ENCODE measurements at regions of chr11 and their contacts with region 1.

Region 1: DNA sequence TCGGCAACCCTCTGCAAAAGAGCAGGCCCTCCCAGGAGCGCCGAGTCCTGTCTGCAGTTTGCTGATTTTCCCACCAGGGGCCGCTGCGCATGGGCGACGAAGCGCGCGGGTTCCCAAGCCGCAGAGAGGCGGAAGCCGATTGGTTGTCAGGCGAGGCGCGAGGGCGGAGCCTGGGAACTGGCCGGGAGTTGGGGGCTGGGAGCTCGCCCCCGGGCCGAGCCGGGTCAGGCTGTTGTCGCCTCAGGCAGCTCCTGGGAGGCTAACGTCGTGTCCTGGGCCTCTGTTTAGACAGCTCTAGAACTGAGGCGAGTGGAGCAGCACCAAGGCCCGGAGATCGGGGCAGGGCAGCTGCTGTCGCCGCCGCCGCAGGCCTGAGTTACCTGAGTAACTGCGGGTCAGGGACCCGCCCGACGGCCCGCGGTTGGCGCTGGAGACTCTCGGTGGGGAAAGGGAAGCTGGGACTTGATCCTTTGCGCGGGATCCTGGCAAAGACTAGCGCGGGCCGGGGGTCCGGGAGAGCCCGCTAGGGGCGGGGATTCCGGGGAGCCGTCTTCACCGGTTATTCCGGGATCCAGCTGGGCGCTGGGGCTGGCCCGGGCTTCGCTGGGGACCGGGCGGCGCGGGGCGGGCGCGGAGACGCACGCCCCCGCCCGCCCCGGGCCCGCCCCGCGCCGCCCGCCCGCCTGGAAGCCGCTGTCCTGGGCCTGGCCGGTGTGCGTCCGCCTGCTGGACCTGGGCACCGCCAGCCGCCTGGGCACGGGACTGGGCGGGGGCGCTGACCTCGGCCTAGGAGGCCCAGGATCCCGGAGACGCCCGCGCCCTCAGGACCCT is at the start of gene STIM1:
- DNase-seq: peak; percentile 96
- H3K4me3 ChIP-seq: peak within 1 kb of the TSS; percentile 81
- H3K27ac ChIP-seq: peak within 1 kb of the TSS; percentile 94
- H3K4me1 ChIP-seq: peaks cover 62% of the 10 kb centered on the region
- CTCF ChIP-seq: peak; percentile 89
- total RNA-seq, gene STIM1: 20.9 and 21.0 TPM in 2 replicates

Region 2: DNA sequence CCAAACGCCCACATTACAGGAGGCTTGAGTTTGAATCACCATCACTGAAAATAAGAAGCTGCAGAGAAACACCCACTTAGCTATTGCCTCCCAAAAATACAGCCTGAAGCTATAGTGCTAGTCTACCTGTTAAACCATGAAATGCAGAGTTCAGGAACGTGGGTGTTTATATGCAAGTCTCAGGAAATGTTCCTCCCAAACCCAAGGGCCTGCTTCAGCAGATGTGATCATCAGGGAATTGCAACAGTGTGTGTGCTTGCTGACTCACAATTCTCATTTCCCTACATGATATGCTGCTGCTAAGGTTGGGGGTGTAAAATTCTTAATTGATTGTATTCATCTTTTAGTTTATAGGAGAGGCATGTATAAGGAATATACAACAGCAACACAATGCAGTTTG is 107.5 kb before region 1 on chr11:
- CTCF ChIA-PET with region 1: no interaction called
- POLR2A ChIA-PET with region 1: no interaction called
- intact Hi-C with region 1: no loop called
- DNase-seq: no peak
- H3K4me3 ChIP-seq: no peak overlapping the region
- H3K27ac ChIP-seq: no peak overlapping the region
- H3K4me1 ChIP-seq: no peaks in the 10 kb centered on the region
- CTCF ChIP-seq: no peak

Region 3: DNA sequence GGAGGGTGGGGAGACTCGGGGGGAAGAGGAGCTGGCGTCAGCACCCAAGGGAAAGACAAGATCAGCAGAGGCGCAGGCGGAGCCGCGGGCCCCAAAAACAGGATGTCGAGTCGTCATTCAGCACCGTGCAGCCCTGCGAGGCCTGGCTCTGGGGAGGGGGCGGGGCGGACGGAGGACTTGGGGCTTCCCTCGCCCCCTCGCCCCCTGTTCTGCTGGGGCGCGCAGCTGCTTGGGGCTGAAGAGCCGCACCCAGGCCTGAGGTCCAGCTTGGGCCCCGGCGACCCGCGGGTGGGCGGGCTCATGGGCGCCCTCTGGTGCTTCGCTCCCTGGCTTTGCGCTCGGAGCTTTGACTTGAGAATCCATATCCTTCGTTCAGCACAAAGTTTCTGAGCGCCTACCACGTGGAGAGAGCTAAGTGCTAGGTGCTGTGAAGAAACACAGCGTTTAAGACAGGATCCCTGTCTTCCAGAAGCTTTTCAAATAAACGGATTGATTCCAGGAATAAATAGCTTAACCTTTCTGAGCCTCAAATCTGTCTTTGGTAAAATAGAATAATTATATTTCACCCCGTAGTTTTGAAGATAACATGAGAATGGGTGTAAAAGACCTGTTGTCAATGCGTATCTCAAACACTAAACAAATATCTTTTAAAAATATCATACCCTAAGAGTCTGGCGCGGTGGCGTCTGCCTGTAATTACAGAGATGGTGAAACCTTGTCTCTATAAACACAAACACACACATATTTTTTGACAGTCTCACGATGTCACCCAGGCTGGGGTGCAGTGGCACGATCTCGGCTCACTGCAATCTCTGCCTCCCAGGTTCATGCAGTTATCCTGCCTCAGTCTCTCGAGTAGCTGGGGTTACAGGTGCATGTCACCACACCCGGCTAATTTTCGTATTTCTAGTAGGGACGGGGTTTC is 13.5 kb before region 1 on chr11:
- CTCF ChIA-PET with region 1: interaction called, 20 read pairs
- POLR2A ChIA-PET with region 1: interaction called, 75 read pairs
- intact Hi-C with region 1: no loop called
- DNase-seq: peak; percentile 90
- H3K4me3 ChIP-seq: peak overlapping the region; percentile 81
- H3K27ac ChIP-seq: peak overlapping the region; percentile 82
- H3K4me1 ChIP-seq: peaks cover 39% of the 10 kb centered on the region
- CTCF ChIP-seq: peak; percentile 91

Region 4: GRCh38 chr11:3873712-3874349 is 18.6 kb after region 1 on chr11:
- CTCF ChIA-PET with region 1: interaction called, 4 read pairs
- POLR2A ChIA-PET with region 1: interaction called, 29 read pairs
- intact Hi-C with region 1: no loop called
- DNase-seq: no peak
- H3K4me3 ChIP-seq: no peak overlapping the region
- H3K27ac ChIP-seq: no peak overlapping the region
- H3K4me1 ChIP-seq: peaks cover 45% of the 10 kb centered on the region
- CTCF ChIP-seq: no peak

Region 5: GRCh38 chr11:3888876-3889275 is 33.7 kb after region 1 on chr11:
- CTCF ChIA-PET with region 1: interaction called, 12 read pairs
- POLR2A ChIA-PET with region 1: interaction called, 24 read pairs
- intact Hi-C with region 1: loop called (anchors 2 kb)
- DNase-seq: no peak
- H3K4me3 ChIP-seq: no peak overlapping the region
- H3K27ac ChIP-seq: no peak overlapping the region
- H3K4me1 ChIP-seq: peaks cover 59% of the 10 kb centered on the region
- CTCF ChIP-seq: no peak

Region 6: DNA sequence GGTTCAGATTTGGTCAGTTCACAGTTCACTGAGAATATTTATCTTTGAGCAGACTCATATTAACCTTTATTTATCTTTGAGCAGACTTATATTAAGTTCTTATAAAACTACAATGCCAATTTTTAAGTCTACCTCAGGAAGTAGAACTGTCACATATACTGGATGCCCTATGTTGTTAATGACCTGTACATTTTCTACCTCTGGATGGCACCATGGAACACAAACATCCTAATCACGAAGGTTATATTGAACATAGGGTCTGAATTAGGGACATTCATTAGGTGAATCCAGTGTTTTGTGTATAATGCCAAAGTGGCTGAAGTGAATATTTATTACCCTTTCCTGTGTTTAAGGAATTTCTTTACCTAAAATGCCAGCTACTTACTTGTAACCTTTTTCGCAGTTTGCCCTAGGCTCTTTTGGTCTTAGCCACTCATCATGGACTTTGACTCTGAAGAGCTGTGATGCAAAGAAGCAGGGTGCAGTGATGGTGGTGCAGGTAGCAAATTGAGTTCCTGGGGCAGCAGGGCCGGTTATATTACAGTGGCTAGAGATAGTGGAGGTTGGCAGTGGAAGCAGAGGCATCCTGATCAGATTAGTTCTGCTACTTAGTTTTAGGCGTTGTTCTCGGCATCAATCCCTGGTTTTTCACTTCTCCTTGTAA is 72.1 kb after region 1 on chr11:
- CTCF ChIA-PET with region 1: no interaction called
- POLR2A ChIA-PET with region 1: interaction called, 12 read pairs
- intact Hi-C with region 1: no loop called
- DNase-seq: peak; percentile 29
- H3K4me3 ChIP-seq: no peak overlapping the region
- H3K27ac ChIP-seq: no peak overlapping the region
- H3K4me1 ChIP-seq: peaks cover 19% of the 10 kb centered on the region
- CTCF ChIP-seq: peak; percentile 71

Region 7: GRCh38 chr11:3984896-3985295 is 129.7 kb after region 1 on chr11:
- CTCF ChIA-PET with region 1: no interaction called
- POLR2A ChIA-PET with region 1: interaction called, 3 read pairs
- intact Hi-C with region 1: loop called (anchors 10 kb)
- DNase-seq: peak; percentile 50
- H3K4me3 ChIP-seq: no peak overlapping the region
- H3K27ac ChIP-seq: no peak overlapping the region
- H3K4me1 ChIP-seq: peaks cover 13% of the 10 kb centered on the region
- CTCF ChIP-seq: peak; percentile 61

Region 8: GRCh38 chr11:4072668-4073285 is 217.6 kb after region 1 on chr11:
- CTCF ChIA-PET with region 1: interaction called, 36 read pairs
- POLR2A ChIA-PET with region 1: interaction called, 38 read pairs
- intact Hi-C with region 1: loop called (anchors 1 kb)
- DNase-seq: peak; percentile 80
- H3K4me3 ChIP-seq: no peak overlapping the region
- H3K27ac ChIP-seq: no peak overlapping the region
- H3K4me1 ChIP-seq: peaks cover 20% of the 10 kb centered on the region
- CTCF ChIP-seq: peak; percentile 94

Region 9: GRCh38 chr11:4508886-4509285 is 653.7 kb after region 1 on chr11:
- CTCF ChIA-PET with region 1: no interaction called
- POLR2A ChIA-PET with region 1: no interaction called
- intact Hi-C with region 1: no loop called
- DNase-seq: no peak
- H3K4me3 ChIP-seq: no peak overlapping the region
- H3K27ac ChIP-seq: no peak overlapping the region
- H3K4me1 ChIP-seq: no peaks in the 10 kb centered on the region
- CTCF ChIP-seq: no peak

Measured in OCI-LY7 (cell line).